Gastrocnemius medialis (tissue), 4 donors: ENCODE measurements at regions of chr9 and their contacts with region 1.

Region 1: GRCh38 chr9:115524453-115525059 is 406.6 kb upstream of the TNC start:
- DNase-seq: no peak
- ATAC-seq: no peak
- H3K4me3 ChIP-seq: no peak overlapping the region
- H3K27ac ChIP-seq: no peak overlapping the region
- H3K4me1 ChIP-seq: no peaks in the 10 kb centered on the region
- H3K27me3 ChIP-seq: no peaks in the 10 kb centered on the region
- CTCF ChIP-seq: peak in 4 of 5 experiments; percentile 33 to 54 (median 46)
- POLR2A ChIP-seq: no peak

Region 2: GRCh38 chr9:114681594-114682332 is 842.8 kb before region 1 on chr9 and contains the start of gene TEX48:
- in situ Hi-C with region 1: loop called in 2 of 4 experiments (anchors 10 to 25 kb)
- intact Hi-C with region 1: no loop called
- DNase-seq: peak in 1 of 2 donors; percentile 19
- ATAC-seq: no peak
- H3K4me3 ChIP-seq: no peak within 1 kb of the TSS
- H3K27ac ChIP-seq: no peak within 1 kb of the TSS
- H3K4me1 ChIP-seq: no peaks in the 10 kb centered on the region
- H3K27me3 ChIP-seq: peaks cover 0 to 3% (median 0%) of the 10 kb centered on the region in 3 donors
- CTCF ChIP-seq: peak in 2 of 5 experiments; percentile 42 to 47
- POLR2A ChIP-seq: no peak
- total RNA-seq, gene TEX48: not detected

Region 3: GRCh38 chr9:114738581-114739316 is 785.8 kb before region 1 on chr9:
- in situ Hi-C with region 1: loop called in 2 of 4 experiments (anchors 10 to 25 kb)
- intact Hi-C with region 1: no loop called
- DNase-seq: peak; percentile 35
- ATAC-seq: peak in 1 of 2 donors; percentile 42
- H3K4me3 ChIP-seq: no peak overlapping the region
- H3K27ac ChIP-seq: no peak overlapping the region
- H3K4me1 ChIP-seq: no peaks in the 10 kb centered on the region
- H3K27me3 ChIP-seq: no peaks in the 10 kb centered on the region
- CTCF ChIP-seq: peak; percentile 50 to 71 (median 70)
- POLR2A ChIP-seq: no peak

Region 4: DNA sequence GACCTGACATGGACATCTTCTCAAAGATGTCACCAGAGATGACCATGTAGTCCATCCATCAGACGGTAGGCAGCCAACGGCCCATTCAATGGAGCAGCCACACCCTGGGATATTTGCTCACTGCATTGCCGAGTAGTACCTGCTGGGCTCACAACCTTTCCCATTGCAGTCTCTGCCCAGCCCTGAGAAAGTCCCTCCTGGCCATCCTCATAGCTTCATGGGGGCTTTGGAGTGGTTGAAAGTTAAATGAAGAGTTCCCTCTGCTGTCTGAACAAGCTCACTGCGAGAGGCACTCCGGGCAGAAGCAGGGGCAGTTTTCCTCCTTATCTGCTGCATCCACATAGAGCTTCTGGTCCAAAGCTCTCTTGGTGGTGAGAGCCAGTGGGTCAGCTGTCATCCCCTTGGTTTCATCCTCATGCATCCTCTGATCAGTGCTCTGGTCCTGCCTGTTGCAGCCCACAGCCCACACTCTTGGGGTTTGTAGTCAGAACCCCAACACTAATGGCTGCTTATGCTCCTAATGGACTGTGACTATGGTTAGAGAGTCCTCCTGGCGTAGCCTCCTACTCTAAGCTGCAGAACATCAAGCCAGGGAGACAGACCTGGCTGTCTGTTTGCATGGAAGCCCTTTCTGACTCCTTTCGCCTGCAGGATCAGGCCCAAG is 617.5 kb before region 1 on chr9:
- in situ Hi-C with region 1: loop called in 1 of 4 experiments (anchors 25 kb)
- intact Hi-C with region 1: no loop called
- DNase-seq: no peak
- ATAC-seq: no peak
- H3K4me3 ChIP-seq: no peak overlapping the region
- H3K27ac ChIP-seq: no peak overlapping the region
- H3K4me1 ChIP-seq: no peaks in the 10 kb centered on the region
- H3K27me3 ChIP-seq: no peaks in the 10 kb centered on the region
- CTCF ChIP-seq: no peak
- POLR2A ChIP-seq: no peak

Region 5: GRCh38 chr9:115456515-115456914 is 68.0 kb before region 1 on chr9:
- in situ Hi-C with region 1: no loop called
- intact Hi-C with region 1: no loop called
- DNase-seq: no peak
- ATAC-seq: no peak
- H3K4me3 ChIP-seq: no peak overlapping the region
- H3K27ac ChIP-seq: no peak overlapping the region
- H3K4me1 ChIP-seq: no peaks in the 10 kb centered on the region
- H3K27me3 ChIP-seq: no peaks in the 10 kb centered on the region
- CTCF ChIP-seq: no peak
- POLR2A ChIP-seq: no peak

Region 6: DNA sequence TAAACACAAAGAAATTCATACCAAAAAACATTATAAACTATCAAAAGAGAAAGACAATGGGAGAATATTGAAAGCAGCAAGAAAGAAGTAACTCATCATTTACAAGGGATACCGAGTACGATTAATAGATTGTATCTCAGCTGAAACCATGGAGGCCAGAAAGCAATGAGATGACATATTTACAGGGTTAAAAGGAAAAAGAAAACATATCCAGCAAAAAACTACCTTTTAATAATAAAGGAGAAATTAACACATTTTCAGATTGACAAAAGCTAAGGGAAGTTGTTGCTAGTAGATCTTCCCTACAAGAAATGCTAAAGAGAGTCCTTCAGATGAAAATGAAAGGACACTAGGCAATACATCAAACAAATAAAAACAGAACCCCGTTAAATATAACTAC is 41.8 kb before region 1 on chr9:
- in situ Hi-C with region 1: no loop called
- intact Hi-C with region 1: no loop called
- DNase-seq: no peak
- ATAC-seq: no peak
- H3K4me3 ChIP-seq: no peak overlapping the region
- H3K27ac ChIP-seq: no peak overlapping the region
- H3K4me1 ChIP-seq: no peaks in the 10 kb centered on the region
- H3K27me3 ChIP-seq: no peaks in the 10 kb centered on the region
- CTCF ChIP-seq: no peak
- POLR2A ChIP-seq: no peak